BJ (cell line): ENCODE measurements at regions of chr11 and their contacts with region 1.

Region 1: GRCh38 chr11:86218125-86219084 is 26.1 kb upstream of the EED start:
- DNase-seq: no peak
- H3K4me3 ChIP-seq: no peak overlapping the region
- H3K27me3 ChIP-seq: no peaks in the 10 kb centered on the region
- CTCF ChIP-seq: peak; percentile 96

Region 2: GRCh38 chr11:86014221-86014620 is 204.2 kb before region 1 on chr11:
- CTCF ChIA-PET with region 1: interaction called, 10 read pairs
- POLR2A ChIA-PET with region 1: no interaction called
- DNase-seq: no peak
- H3K4me3 ChIP-seq: no peak overlapping the region
- H3K27me3 ChIP-seq: no peaks in the 10 kb centered on the region
- CTCF ChIP-seq: no peak

Region 3: DNA sequence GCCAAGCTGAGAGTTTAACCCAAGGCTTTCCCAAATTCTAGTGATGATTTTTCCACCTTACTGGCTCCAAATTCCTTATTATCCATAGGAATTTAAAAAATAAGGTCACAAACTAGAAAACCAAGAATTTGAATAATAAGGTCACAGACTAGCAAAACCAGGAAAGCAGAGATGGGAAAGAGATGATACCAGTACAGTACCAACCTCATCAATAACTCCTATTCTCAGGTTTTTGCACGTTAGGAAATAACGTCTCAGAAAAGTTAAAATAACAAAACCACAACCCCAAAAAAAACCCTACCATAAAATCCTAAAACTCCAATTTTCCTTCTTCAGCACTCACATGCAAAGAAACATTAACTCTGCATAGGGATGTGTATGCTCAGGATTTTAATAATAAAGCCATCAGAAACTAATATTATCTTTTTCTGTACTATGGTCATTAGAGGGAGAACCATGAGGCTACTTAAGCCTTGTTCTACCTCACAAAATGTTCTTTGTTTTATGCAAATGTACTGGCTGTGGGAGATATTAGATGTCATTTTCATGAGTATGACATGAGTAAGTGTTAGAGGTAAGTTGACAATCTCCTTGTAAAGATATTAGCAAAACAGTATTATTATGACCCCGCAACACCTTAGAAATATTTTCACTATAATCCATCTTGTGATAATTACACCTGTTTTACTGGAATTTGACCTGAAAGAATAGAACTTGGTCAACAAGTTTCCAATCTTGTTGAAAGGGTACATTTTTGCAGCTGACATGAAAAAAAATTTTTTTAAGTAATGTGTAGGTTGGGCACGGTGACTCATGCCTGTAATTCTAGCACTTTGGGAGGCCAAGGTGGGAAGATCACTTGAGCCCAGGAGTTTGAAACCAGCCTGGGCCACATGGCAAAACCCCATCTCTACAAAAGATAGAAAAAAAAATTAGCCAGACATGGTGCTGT is 10.1 kb after region 1 on chr11:
- CTCF ChIA-PET with region 1: interaction called, 10 read pairs
- POLR2A ChIA-PET with region 1: interaction called, 3 read pairs
- DNase-seq: no peak
- H3K4me3 ChIP-seq: no peak overlapping the region
- H3K27me3 ChIP-seq: no peaks in the 10 kb centered on the region
- CTCF ChIP-seq: no peak